Mammary epithelial cell (primary cell): ENCODE measurements at regions of chr10 and their contacts with region 1.

Region 1: GRCh38 chr10:8053446-8054290 is 820 bp upstream of the GATA3 start:
- DNase-seq: peak; percentile 89
- H3K4me3 ChIP-seq: peak overlapping the region; percentile 86 to 90 (median 87)
- H3K27ac ChIP-seq: peak overlapping the region; percentile 70
- H3K4me1 ChIP-seq: peaks cover 46% of the 10 kb centered on the region
- H3K27me3 ChIP-seq: no peaks in the 10 kb centered on the region
- CTCF ChIP-seq: peak; percentile 71 to 97

Region 2: DNA sequence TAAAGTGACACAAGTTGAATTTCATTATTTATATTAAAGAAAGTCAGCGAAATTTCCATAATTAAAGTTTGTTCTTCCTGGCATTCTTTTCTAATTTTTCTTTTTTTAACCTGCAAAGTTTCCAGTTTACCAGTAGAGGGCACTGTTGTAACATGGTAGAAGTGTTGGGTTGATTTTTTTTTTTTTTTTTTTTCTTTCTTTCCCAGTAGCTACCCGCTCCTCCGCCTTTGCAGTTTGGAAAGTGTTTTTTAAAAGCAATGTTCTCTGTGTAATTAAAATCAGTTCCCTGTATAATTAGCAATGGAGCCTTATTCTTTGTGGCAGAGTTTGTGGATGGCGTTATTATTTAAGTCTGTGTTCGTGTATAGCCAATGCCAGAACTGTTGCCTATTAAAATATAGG is 181.6 kb before region 1 on chr10:
- CTCF ChIA-PET with region 1: no interaction called
- dilution Hi-C with region 1: no loop called
- in situ Hi-C with region 1: no loop called
- intact Hi-C with region 1: loop called (anchors 2 kb)
- DNase-seq: peak; percentile 27
- H3K4me3 ChIP-seq: peak overlapping the region; percentile 47 to 78 (median 47)
- H3K27ac ChIP-seq: no peak overlapping the region
- H3K4me1 ChIP-seq: no peaks in the 10 kb centered on the region
- H3K27me3 ChIP-seq: no peaks in the 10 kb centered on the region
- CTCF ChIP-seq: peak; percentile 51 to 69

Region 3: DNA sequence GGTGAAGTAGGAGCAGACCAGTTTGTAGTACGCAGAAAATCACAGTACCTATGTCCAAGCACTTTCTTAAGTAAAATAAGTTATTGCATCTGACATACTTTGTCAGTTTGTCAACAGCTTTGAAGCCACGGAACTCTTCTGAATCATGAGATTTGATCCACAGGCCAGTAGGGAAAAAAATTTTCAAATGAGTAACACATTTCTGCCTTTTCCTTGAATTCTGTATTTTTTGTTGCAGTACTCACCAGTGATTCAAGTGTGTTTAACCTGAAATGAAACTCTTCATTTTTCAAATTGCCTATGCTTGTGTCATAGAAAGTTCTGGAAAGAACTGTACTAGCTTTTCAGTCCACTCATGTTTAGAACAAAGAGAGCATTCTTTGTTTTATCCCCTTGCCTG is 338.5 kb after region 1 on chr10:
- CTCF ChIA-PET with region 1: no interaction called
- dilution Hi-C with region 1: no loop called
- in situ Hi-C with region 1: no loop called
- intact Hi-C with region 1: loop called (anchors 10 kb)
- DNase-seq: peak; percentile 86
- H3K4me3 ChIP-seq: no peak overlapping the region
- H3K27ac ChIP-seq: no peak overlapping the region
- H3K4me1 ChIP-seq: peaks cover 28% of the 10 kb centered on the region
- H3K27me3 ChIP-seq: no peaks in the 10 kb centered on the region
- CTCF ChIP-seq: no peak

Region 4: DNA sequence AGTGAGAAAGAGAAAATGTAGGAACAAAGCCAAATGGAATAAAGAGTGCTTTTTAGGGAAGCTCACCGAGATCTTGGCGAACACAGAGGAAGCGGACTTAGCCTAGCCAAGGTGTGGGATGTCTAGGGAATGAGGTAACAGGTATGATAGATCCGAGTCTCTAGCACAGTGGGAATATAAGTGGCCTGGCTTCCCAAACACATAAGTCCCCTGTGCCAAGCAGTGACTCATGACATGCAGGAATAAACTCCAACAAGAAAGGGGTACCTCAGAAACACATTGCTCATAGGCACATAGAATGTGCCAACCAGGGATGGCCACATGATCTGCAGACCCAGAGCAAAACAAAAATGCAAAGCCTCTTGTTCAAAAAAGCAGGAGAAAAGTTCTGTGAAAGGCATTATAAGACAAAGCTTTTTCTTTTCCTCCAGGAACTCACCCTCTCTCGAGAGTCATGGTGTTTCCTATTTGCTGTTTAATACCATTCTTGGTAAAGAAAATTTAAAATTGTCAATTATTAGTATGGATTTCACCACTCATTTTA is 543.3 kb after region 1 on chr10:
- CTCF ChIA-PET with region 1: no interaction called
- dilution Hi-C with region 1: no loop called
- in situ Hi-C with region 1: loop called in 1 of 2 experiments (anchors 10 kb)
- intact Hi-C with region 1: loop called (anchors 2 kb)
- DNase-seq: peak; percentile 84
- H3K4me3 ChIP-seq: no peak overlapping the region
- H3K27ac ChIP-seq: peak overlapping the region; percentile 17
- H3K4me1 ChIP-seq: peaks cover 28% of the 10 kb centered on the region
- H3K27me3 ChIP-seq: no peaks in the 10 kb centered on the region
- CTCF ChIP-seq: no peak

Region 5: DNA sequence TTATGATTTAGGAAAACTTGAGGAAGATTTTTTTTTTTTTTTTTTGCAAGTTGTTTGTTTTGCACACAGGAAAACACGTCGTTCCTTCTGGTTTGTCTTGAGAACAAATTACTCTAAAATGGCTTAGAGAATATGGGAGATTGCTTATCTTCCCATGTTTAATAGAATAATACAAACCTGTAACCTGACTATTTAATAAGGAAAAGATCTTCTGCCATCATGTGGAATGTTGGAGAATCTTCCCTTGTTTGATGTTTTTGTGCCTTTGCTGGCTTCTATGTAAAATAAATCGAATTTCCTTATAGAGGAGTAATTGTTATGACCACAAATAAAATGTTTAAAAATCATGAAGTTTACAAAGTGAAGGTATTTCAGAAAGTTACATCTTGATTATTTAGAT is 819.6 kb after region 1 on chr10:
- CTCF ChIA-PET with region 1: no interaction called
- dilution Hi-C with region 1: no loop called
- in situ Hi-C with region 1: loop called in 1 of 2 experiments (anchors 5 kb)
- intact Hi-C with region 1: loop called (anchors 1 kb)
- DNase-seq: peak; percentile 37
- H3K4me3 ChIP-seq: no peak overlapping the region
- H3K27ac ChIP-seq: no peak overlapping the region
- H3K4me1 ChIP-seq: no peaks in the 10 kb centered on the region
- H3K27me3 ChIP-seq: no peaks in the 10 kb centered on the region
- CTCF ChIP-seq: peak; percentile 37 to 54

Region 6: DNA sequence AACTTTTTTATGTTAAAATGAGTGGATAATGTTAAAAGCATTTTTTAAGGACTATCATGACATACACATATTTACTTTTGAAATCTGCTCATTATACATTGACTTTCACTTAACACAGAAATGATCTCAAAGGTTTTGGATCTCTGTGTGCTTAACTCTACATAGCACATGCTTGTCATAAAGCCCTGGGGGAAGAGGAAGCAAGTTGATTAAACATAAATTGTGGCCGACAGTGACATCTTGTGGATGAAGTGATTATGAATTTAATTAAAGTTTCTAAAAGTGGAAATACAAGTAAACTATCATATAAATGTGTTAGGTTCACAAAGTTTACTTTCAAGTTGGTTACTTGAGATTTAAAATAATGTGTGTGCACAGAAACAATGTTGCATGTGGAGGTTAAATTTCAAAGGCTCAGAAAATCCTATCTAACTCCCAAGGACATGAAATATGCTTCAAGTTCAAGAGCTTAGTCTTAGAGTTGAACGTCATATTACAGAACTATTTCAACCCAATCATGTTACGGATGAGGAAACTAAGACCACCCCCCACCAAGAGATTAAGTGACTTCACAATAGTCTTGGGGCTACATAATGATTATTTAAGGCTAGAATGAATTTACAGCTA is 1248.6 kb after region 1 on chr10:
- CTCF ChIA-PET with region 1: no interaction called
- dilution Hi-C with region 1: no loop called
- in situ Hi-C with region 1: no loop called
- intact Hi-C with region 1: loop called (anchors 5 kb)
- DNase-seq: peak; percentile 47
- H3K4me3 ChIP-seq: no peak overlapping the region
- H3K27ac ChIP-seq: no peak overlapping the region
- H3K4me1 ChIP-seq: no peaks in the 10 kb centered on the region
- H3K27me3 ChIP-seq: no peaks in the 10 kb centered on the region
- CTCF ChIP-seq: peak; percentile 26 to 35